ENCODE measurements at regions of chr11 and their contacts with region 1.

Region 1: DNA sequence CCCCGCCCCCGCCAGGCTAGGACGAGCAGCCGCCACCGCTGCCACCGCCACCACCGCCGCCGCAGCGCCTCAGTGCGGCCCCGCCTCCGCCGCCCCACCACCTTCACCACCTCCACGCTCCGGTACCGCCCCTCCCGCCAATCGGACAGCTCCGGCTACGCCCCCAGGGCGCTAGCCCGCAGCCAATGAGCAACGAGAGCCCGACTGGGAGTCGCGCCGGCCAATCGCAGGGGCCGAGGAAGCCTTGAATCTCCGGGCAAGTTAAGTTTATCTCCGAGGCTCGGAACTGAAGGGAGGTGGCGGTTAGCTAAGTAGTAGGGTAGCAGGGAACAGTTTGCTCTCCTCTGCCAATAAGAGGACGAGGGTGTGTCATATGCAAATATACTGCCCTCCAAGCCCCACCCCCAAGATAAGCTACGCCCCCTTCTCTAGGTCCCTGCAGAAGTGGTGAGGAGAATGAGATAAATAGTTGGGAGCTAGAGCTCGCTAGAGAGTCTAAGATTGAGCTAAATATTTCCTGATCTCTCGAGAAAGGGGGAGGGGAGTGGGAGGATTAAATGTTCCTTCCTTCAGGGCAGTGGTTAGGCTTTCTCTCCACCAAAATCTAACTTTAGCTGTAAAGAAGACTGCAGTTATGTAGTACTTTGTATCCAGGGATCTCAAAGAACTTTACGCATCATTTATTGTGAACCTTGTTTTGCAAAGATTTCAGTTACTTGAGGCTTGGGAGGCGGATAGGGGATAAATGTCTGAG is at the start of gene SESN3:
- DNase-seq: peak; percentile 93
- ATAC-seq: peak; percentile 89
- H3K4me3 ChIP-seq: peak within 1 kb of the TSS; percentile 62
- H3K27ac ChIP-seq: no peak within 1 kb of the TSS
- H3K4me1 ChIP-seq: peaks cover 8% of the 10 kb centered on the region
- H3K27me3 ChIP-seq: peaks cover 0 to 27% of the 10 kb centered on the region in 2 experiments; a peak in 2 of 4 replicates
- CTCF ChIP-seq: no peak; a peak in 1 of 6 replicates
- EP300 ChIP-seq: peak in 1 of 2 experiments; percentile 23; a peak in 1 of 4 replicates
- POLR2A ChIP-seq: peak; percentile 57; the same call in 1 of the 2 replicates
- RAD21 ChIP-seq: peak; percentile 35; the same call in 1 of the 2 replicates
- polyA plus RNA-seq, gene SESN3: 0.68 to 1.5 TPM

Region 2: GRCh38 chr11:95067039-95067840 is 164.1 kb before region 1 on chr11:
- CTCF ChIA-PET with region 1: interaction called, 5 read pairs
- POLR2A ChIA-PET with region 1: interaction called, 5 read pairs
- RAD21 ChIA-PET with region 1: interaction called, 15 read pairs
- SMC1A ChIA-PET with region 1: no interaction called
- in situ Hi-C with region 1: no loop called
- intact Hi-C with region 1: no loop called
- DNase-seq: no peak
- ATAC-seq: peak; percentile 80
- H3K4me3 ChIP-seq: peak overlapping the region; percentile 99
- H3K27ac ChIP-seq: peak overlapping the region; percentile 75
- H3K4me1 ChIP-seq: 0 out of 2 replicates have a peak, but pooled peaks cover 3% of the 10 kb centered on the region
- H3K27me3 ChIP-seq: no peaks in the 10 kb centered on the region
- CTCF ChIP-seq: peak; percentile 40 to 63 (median 54)
- EP300 ChIP-seq: no peak
- POLR2A ChIP-seq: peak; percentile 90
- RAD21 ChIP-seq: 0 out of 2 replicates have a peak, but pooled peaks have one; percentile 15

Region 3: DNA sequence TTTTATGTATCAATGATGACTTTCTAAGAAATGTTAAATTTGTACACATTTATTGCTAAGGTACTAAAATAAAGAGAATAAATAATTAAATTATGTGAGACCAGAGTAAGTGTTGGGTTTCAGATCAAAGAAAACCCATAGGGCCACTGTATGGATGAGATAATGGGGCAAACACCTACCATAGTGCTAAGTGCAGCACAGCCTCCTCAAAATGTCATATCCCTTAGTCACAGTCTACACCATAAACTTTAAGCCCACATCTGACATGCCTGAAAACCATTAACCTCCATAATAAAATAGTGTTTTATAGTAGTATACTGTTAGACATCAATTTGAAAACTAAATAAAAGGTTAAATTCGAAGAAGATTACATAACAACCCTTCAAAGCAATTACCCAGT is 37.8 kb before region 1 on chr11:
- CTCF ChIA-PET with region 1: no interaction called
- POLR2A ChIA-PET with region 1: interaction called, 4 read pairs
- RAD21 ChIA-PET with region 1: interaction called, 10 read pairs
- SMC1A ChIA-PET with region 1: interaction called, 9 read pairs
- in situ Hi-C with region 1: no loop called
- intact Hi-C with region 1: no loop called
- DNase-seq: no peak
- ATAC-seq: no peak
- H3K4me3 ChIP-seq: no peak overlapping the region
- H3K27ac ChIP-seq: no peak overlapping the region
- H3K4me1 ChIP-seq: no peaks in the 10 kb centered on the region
- H3K27me3 ChIP-seq: no peaks in the 10 kb centered on the region
- CTCF ChIP-seq: no peak
- EP300 ChIP-seq: no peak
- POLR2A ChIP-seq: no peak
- RAD21 ChIP-seq: no peak

Region 4: GRCh38 chr11:95248666-95249467 is 17.6 kb after region 1 on chr11:
- CTCF ChIA-PET with region 1: interaction called, 49 read pairs
- POLR2A ChIA-PET with region 1: interaction called, 160 read pairs
- RAD21 ChIA-PET with region 1: interaction called, 195 read pairs
- SMC1A ChIA-PET with region 1: interaction called, 261 read pairs
- in situ Hi-C with region 1: no loop called
- intact Hi-C with region 1: loop called (anchors 1 kb)
- DNase-seq: peak; percentile 74
- ATAC-seq: peak; percentile 85
- H3K4me3 ChIP-seq: peak overlapping the region; percentile 41; the same call in 1 of the 2 replicates
- H3K27ac ChIP-seq: peak overlapping the region; percentile 63
- H3K4me1 ChIP-seq: peaks cover 35% of the 10 kb centered on the region
- H3K27me3 ChIP-seq: no peaks in the 10 kb centered on the region
- CTCF ChIP-seq: no peak
- EP300 ChIP-seq: peak in 1 of 2 experiments; percentile 73; a peak in 1 of 4 replicates
- POLR2A ChIP-seq: no peak
- RAD21 ChIP-seq: no peak

Region 5: GRCh38 chr11:95305705-95306104 is 74.4 kb after region 1 on chr11:
- CTCF ChIA-PET with region 1: interaction called, 3 read pairs
- POLR2A ChIA-PET with region 1: interaction called, 4 read pairs
- RAD21 ChIA-PET with region 1: interaction called, 6 read pairs
- SMC1A ChIA-PET with region 1: interaction called, 13 read pairs
- in situ Hi-C with region 1: no loop called
- intact Hi-C with region 1: no loop called
- DNase-seq: no peak
- ATAC-seq: no peak
- H3K4me3 ChIP-seq: no peak overlapping the region
- H3K27ac ChIP-seq: no peak overlapping the region
- H3K4me1 ChIP-seq: no peaks in the 10 kb centered on the region
- H3K27me3 ChIP-seq: no peaks in the 10 kb centered on the region; a peak in 1 of 4 replicates
- CTCF ChIP-seq: no peak
- EP300 ChIP-seq: no peak
- POLR2A ChIP-seq: no peak
- RAD21 ChIP-seq: no peak

Region 6: GRCh38 chr11:95531116-95531515 is 299.8 kb after region 1 on chr11:
- CTCF ChIA-PET with region 1: no interaction called
- POLR2A ChIA-PET with region 1: no interaction called
- RAD21 ChIA-PET with region 1: no interaction called
- SMC1A ChIA-PET with region 1: no interaction called
- in situ Hi-C with region 1: no loop called
- intact Hi-C with region 1: no loop called
- DNase-seq: no peak
- ATAC-seq: no peak
- H3K4me3 ChIP-seq: no peak overlapping the region
- H3K27ac ChIP-seq: no peak overlapping the region
- H3K4me1 ChIP-seq: no peaks in the 10 kb centered on the region
- H3K27me3 ChIP-seq: no peaks in the 10 kb centered on the region
- CTCF ChIP-seq: no peak
- EP300 ChIP-seq: no peak
- POLR2A ChIP-seq: no peak
- RAD21 ChIP-seq: no peak

Region 7: GRCh38 chr11:95699631-95700470 is 468.5 kb after region 1 on chr11:
- CTCF ChIA-PET with region 1: interaction called, 82 read pairs
- POLR2A ChIA-PET with region 1: interaction called, 9 read pairs
- RAD21 ChIA-PET with region 1: interaction called, 65 read pairs
- SMC1A ChIA-PET with region 1: interaction called, 44 read pairs
- in situ Hi-C with region 1: no loop called
- intact Hi-C with region 1: loop called (anchors 1 kb)
- DNase-seq: no peak
- ATAC-seq: peak; percentile 73
- H3K4me3 ChIP-seq: peak overlapping the region; percentile 30; the same call in 1 of the 2 replicates
- H3K27ac ChIP-seq: peak overlapping the region; percentile 15; the same call in 1 of the 2 replicates
- H3K4me1 ChIP-seq: peaks cover 18% of the 10 kb centered on the region
- H3K27me3 ChIP-seq: no peaks in the 10 kb centered on the region
- CTCF ChIP-seq: no peak
- EP300 ChIP-seq: 0 out of 4 replicates have a peak, but pooled peaks of 1 of the 2 experiments have one; percentile 13
- POLR2A ChIP-seq: no peak
- RAD21 ChIP-seq: no peak

Region 8: GRCh38 chr11:95790123-95790932 is 559.0 kb after region 1 on chr11 and contains the start of gene CEP57:
- CTCF ChIA-PET with region 1: interaction called, 4 read pairs
- POLR2A ChIA-PET with region 1: interaction called, 16 read pairs
- RAD21 ChIA-PET with region 1: interaction called, 4 read pairs
- SMC1A ChIA-PET with region 1: interaction called, 3 read pairs
- in situ Hi-C with region 1: no loop called
- intact Hi-C with region 1: no loop called
- DNase-seq: peak; percentile 92
- ATAC-seq: peak; percentile 73
- H3K4me3 ChIP-seq: peak within 1 kb of the TSS; percentile 87
- H3K27ac ChIP-seq: peak within 1 kb of the TSS; percentile 90
- H3K4me1 ChIP-seq: 0 out of 2 replicates have a peak, but pooled peaks cover 3% of the 10 kb centered on the region
- H3K27me3 ChIP-seq: no peaks in the 10 kb centered on the region
- CTCF ChIP-seq: no peak
- EP300 ChIP-seq: 0 out of 4 replicates have a peak, but pooled peaks of 1 of the 2 experiments have one; percentile 40
- POLR2A ChIP-seq: peak; percentile 77
- RAD21 ChIP-seq: no peak
- polyA plus RNA-seq, gene CEP57: 19.4 to 25.8 TPM